Colonic mucosa (tissue), 4 donors: ENCODE measurements at regions of chr6 and their contacts with region 1.

Region 1: DNA sequence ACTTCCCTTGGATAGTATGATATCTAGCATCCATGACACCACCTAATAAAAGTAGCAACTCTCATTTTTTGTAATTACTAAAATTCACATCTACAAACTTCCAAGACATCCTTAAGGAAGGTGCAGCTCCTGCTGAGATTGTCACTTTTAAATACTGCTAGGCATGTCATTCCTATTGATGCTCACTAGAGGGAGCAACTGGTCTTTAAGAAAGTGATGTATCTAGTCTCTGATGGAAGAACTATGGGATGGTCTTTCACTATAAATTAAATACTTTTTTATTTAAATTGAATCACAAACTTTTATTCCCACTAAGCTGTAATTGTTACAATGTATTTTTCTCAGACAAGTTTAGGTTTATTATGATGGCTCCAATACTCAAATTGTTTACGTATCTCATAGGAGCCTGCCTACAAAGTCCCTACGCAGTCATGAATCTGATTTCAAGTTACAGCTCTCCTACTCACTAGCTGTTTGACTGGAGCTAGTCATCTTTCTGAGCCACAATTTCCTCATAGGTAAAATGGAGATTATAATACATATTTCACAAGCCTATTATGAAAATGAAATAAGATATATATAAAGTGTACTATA is 8.1 kb upstream of the TSPYL1 start:
- DNase-seq: no peak
- H3K4me3 ChIP-seq: no peak overlapping the region
- H3K27ac ChIP-seq: no peak overlapping the region
- H3K4me1 ChIP-seq: no peaks in the 10 kb centered on the region
- H3K27me3 ChIP-seq: no peaks in the 10 kb centered on the region
- CTCF ChIP-seq: peak; percentile 96

Region 2: GRCh38 chr6:116087437-116088027 is 200.3 kb before region 1 on chr6:
- intact Hi-C with region 1: no loop called
- DNase-seq: no peak
- H3K4me3 ChIP-seq: no peak overlapping the region
- H3K27ac ChIP-seq: no peak overlapping the region
- H3K4me1 ChIP-seq: no peaks in the 10 kb centered on the region
- H3K27me3 ChIP-seq: no peaks in the 10 kb centered on the region
- CTCF ChIP-seq: no peak

Region 3: GRCh38 chr6:116531675-116532570 is 244.1 kb after region 1 on chr6:
- intact Hi-C with region 1: loop called (anchors 5 kb)
- DNase-seq: peak; percentile 64
- H3K4me3 ChIP-seq: no peak overlapping the region
- H3K27ac ChIP-seq: no peak overlapping the region
- H3K4me1 ChIP-seq: no peaks in the 10 kb centered on the region
- H3K27me3 ChIP-seq: no peaks in the 10 kb centered on the region
- CTCF ChIP-seq: peak; percentile 72

Region 4: GRCh38 chr6:116564921-116565872 is 277.4 kb after region 1 on chr6:
- intact Hi-C with region 1: loop called (anchors 2 kb)
- DNase-seq: no peak
- H3K4me3 ChIP-seq: peak overlapping the region; percentile 13
- H3K27ac ChIP-seq: no peak overlapping the region
- H3K4me1 ChIP-seq: peaks cover 2% of the 10 kb centered on the region
- H3K27me3 ChIP-seq: no peaks in the 10 kb centered on the region
- CTCF ChIP-seq: no peak